ENCODE measurements at regions of chr9 and their contacts with region 1.

Region 1: GRCh38 chr9:98641695-98642094 is 67.0 kb downstream of the GABBR2 start:
- DNase-seq: no peak
- H3K4me3 ChIP-seq: no peak overlapping the region
- H3K27ac ChIP-seq: no peak overlapping the region
- H3K4me1 ChIP-seq: no peaks in the 10 kb centered on the region
- H3K27me3 ChIP-seq: no peaks in the 10 kb centered on the region
- CTCF ChIP-seq: no peak

Region 2: DNA sequence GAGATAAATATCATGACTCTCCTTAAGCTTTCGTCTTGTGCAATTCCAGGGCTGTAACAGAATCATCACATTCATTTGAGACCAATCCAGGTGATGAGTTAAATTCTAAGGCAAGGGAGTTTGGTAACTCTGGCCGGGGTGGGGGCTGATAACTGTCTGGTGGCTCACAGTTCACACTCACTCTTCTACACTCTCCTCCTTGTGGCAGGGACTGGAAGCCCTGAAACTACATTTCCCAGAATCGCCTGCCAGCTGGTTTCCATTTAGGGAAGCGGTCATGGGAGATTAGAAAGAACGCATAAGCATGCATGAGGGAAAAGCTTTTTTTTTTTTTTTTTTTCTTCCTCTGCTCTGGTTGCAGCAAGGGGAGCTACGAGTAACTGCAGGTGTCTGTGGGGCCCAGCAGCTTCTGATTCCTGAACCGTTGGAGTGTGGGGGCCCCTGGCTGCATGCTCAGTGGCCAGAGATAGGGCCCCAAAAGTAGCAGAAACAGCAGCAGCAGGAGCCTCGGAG is 231.5 kb before region 1 on chr9:
- CTCF ChIA-PET with region 1: no interaction called
- POLR2A ChIA-PET with region 1: no interaction called
- intact Hi-C with region 1: no loop called
- DNase-seq: no peak
- H3K4me3 ChIP-seq: no peak overlapping the region
- H3K27ac ChIP-seq: no peak overlapping the region
- H3K4me1 ChIP-seq: no peaks in the 10 kb centered on the region
- H3K27me3 ChIP-seq: no peaks in the 10 kb centered on the region
- CTCF ChIP-seq: no peak

Region 3: GRCh38 chr9:98450486-98450885 is 191.2 kb before region 1 on chr9:
- CTCF ChIA-PET with region 1: interaction called, 12 read pairs
- POLR2A ChIA-PET with region 1: no interaction called
- intact Hi-C with region 1: no loop called
- DNase-seq: no peak
- H3K4me3 ChIP-seq: no peak overlapping the region
- H3K27ac ChIP-seq: no peak overlapping the region
- H3K4me1 ChIP-seq: no peaks in the 10 kb centered on the region
- H3K27me3 ChIP-seq: no peaks in the 10 kb centered on the region
- CTCF ChIP-seq: no peak